Left colon (tissue), 2 donors: ENCODE measurements at regions of chr13 and their contacts with region 1.

Region 1: GRCh38 chr13:73715114-73715910 is 418.9 kb downstream of the KLF12 start:
- DNase-seq: no peak
- ATAC-seq: peak; percentile 9

Region 2: GRCh38 chr13:72808917-72809500 is 906.3 kb before region 1 on chr13:
- intact Hi-C with region 1: loop called in 1 of 2 experiments (anchors 10 kb)
- DNase-seq: no peak
- ATAC-seq: peak; percentile 34

Region 3: DNA sequence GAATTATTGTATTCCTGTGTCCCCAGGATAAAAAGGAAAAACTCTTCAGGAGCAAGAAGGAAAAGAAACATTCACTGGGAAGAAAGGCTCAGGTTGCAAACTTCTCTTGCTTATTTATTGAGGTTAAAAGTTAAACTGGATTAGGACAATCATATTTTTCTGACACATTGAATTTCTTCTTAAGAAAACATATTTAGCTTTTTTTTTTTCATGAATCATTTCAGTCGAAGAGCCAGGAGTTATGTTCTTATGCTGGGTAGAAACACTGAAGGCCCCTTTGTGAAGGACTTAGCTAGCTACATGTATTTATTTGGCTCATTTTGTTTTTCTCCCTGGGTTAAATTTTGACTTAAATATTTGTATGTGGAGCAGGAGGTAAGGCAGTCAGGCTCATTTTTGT is 222.5 kb before region 1 on chr13:
- intact Hi-C with region 1: no loop called
- DNase-seq: no peak
- ATAC-seq: no peak

Region 4: GRCh38 chr13:73870970-73871935 is 155.9 kb after region 1 on chr13:
- intact Hi-C with region 1: no loop called
- DNase-seq: no peak
- ATAC-seq: peak; percentile 25